PC-9 (cell line): ENCODE measurements at regions of chr19 and their contacts with region 1.

Region 1: DNA sequence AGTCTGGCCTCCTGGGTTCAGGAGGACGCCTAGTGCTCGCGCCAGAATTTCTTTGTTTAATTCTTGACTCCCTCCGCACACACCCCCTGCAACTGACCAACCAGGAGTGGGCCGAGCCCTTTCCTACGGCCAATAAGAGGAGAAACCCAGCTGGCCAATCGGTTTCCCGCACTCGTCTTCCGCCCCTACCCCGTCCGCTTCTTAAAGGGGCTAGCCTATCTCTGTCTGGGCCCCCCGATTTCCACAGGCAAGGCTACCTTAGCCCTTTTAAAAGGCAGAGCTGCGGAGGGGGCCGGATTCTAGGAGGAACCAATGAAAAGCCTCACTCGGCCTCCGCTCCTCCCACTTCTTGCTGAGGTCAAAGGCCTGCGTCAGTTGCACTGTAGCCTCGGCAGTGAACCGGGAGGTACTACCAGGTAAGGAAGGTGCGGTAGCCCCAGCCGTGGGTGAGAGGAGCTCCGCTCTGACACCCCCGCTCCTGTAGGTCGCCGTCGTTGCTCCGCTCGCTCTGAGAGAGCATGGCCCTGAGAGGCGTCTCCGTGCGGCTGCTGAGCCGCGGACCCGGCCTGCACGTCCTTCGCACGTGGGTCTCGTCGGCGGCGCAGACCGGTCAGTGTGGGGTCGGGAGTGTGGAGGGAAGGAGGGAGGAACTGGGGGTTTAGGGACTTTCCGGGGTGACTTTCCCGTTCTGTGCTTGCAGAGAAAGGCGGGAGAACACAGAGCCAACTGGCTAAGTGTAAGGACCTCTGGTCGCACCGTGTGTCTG is at the start of gene GCDH:
- DNase-seq: peak; percentile 96 to 99
- H3K4me3 ChIP-seq: peak within 1 kb of the TSS; percentile 85
- H3K27ac ChIP-seq: no peak within 1 kb of the TSS
- H3K4me1 ChIP-seq: peaks cover 8% of the 10 kb centered on the region
- H3K27me3 ChIP-seq: no peaks in the 10 kb centered on the region
- CTCF ChIP-seq: no peak
- total RNA-seq, gene GCDH: 23.2 and 27.8 TPM in 2 replicates

Region 2: GRCh38 chr19:12821761-12822160 is 69.2 kb before region 1 on chr19:
- CTCF ChIA-PET with region 1: no interaction called
- POLR2A ChIA-PET with region 1: no interaction called
- intact Hi-C with region 1: no loop called
- DNase-seq: no peak
- H3K4me3 ChIP-seq: no peak overlapping the region
- H3K27ac ChIP-seq: no peak overlapping the region
- H3K4me1 ChIP-seq: no peaks in the 10 kb centered on the region
- H3K27me3 ChIP-seq: no peaks in the 10 kb centered on the region
- CTCF ChIP-seq: no peak

Region 3: GRCh38 chr19:12867120-12868099 is 23.6 kb before region 1 on chr19:
- CTCF ChIA-PET with region 1: interaction called, 13 read pairs
- POLR2A ChIA-PET with region 1: no interaction called
- intact Hi-C with region 1: no loop called
- DNase-seq: peak; percentile 72 to 83
- H3K4me3 ChIP-seq: peak overlapping the region; percentile 87
- H3K27ac ChIP-seq: no peak overlapping the region
- H3K4me1 ChIP-seq: no peaks in the 10 kb centered on the region
- H3K27me3 ChIP-seq: no peaks in the 10 kb centered on the region
- CTCF ChIP-seq: no peak; the same call in 1 of the 2 replicates

Region 4: GRCh38 chr19:12918271-12918670 is 27.3 kb after region 1 on chr19:
- CTCF ChIA-PET with region 1: interaction called, 6 read pairs
- POLR2A ChIA-PET with region 1: interaction called, 15 read pairs
- intact Hi-C with region 1: loop called (anchors 2 kb)
- DNase-seq: no peak
- H3K4me3 ChIP-seq: no peak overlapping the region
- H3K27ac ChIP-seq: no peak overlapping the region
- H3K4me1 ChIP-seq: no peaks in the 10 kb centered on the region; the same call in 1 of the 2 replicates
- H3K27me3 ChIP-seq: no peaks in the 10 kb centered on the region
- CTCF ChIP-seq: no peak

Region 5: DNA sequence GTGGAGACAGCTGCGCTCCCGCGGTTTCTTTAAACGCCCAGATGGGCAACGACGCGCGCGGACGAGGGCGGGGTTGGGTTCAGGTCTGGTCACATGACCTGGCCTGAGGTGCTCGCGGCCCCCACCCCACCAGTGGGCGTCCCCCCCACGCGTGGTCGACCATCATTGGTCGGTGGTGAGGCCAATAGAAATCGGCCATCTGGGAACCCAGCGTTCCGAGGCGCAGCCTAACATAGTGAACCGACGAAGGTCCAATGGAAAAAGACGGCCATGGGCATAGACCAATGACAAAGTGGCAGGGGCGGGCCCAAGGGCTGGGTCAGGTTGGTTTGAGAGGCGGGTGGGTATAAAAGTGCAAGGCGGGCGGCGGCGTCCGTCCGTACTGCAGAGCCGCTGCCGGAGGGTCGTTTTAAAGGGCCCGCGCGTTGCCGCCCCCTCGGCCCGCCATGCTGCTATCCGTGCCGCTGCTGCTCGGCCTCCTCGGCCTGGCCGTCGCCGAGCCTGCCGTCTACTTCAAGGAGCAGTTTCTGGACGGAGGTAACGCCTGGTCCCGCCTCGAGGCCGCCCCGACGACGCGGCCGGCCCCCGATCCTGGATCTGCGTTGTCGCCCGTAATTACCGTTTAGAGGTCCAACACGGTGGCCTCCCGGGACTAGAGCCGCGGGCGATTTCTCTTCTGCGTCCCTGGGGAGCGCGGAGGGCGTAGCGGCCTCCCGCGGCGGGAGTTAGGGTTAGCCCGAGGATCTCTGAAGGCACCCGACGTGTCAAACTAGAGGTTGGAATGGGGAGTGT is 47.5 kb after region 1 on chr19 and contains the start of gene CALR:
- CTCF ChIA-PET with region 1: no interaction called
- POLR2A ChIA-PET with region 1: interaction called, 5 read pairs
- intact Hi-C with region 1: loop called (anchors 2 kb)
- DNase-seq: peak; percentile 98 to 99
- H3K4me3 ChIP-seq: peak within 1 kb of the TSS; percentile 99
- H3K27ac ChIP-seq: peak within 1 kb of the TSS; percentile 68
- H3K4me1 ChIP-seq: peaks cover 23% of the 10 kb centered on the region
- H3K27me3 ChIP-seq: no peaks in the 10 kb centered on the region
- CTCF ChIP-seq: peak; percentile 50; the same call in 1 of the 2 replicates
- total RNA-seq, gene CALR: 606 and 727 TPM in 2 replicates

Region 6: GRCh38 chr19:13127051-13127450 is 236.1 kb after region 1 on chr19:
- CTCF ChIA-PET with region 1: no interaction called
- POLR2A ChIA-PET with region 1: interaction called, 15 read pairs
- intact Hi-C with region 1: no loop called
- DNase-seq: no peak
- H3K4me3 ChIP-seq: no peak overlapping the region
- H3K27ac ChIP-seq: no peak overlapping the region
- H3K4me1 ChIP-seq: peaks cover 2% of the 10 kb centered on the region
- H3K27me3 ChIP-seq: no peaks in the 10 kb centered on the region
- CTCF ChIP-seq: no peak